Dendritic cell treated with granulocyte-macrophage colony-stimulating factor and Interleukin-4, amounts not matched to agents 40 ng/mL and 50 ng/mL, for 4 days (primary cell): ENCODE measurements at regions of chr7 and their contacts with region 1.

Region 1: GRCh38 chr7:28685644-28686417 is 272.3 kb downstream of the TRIL start:
- H3K4me3 Mint-ChIP-seq: no peak overlapping the region
- H3K27ac Mint-ChIP-seq: no peak overlapping the region
- H3K4me1 Mint-ChIP-seq: peaks cover 39% of the 10 kb centered on the region
- H3K27me3 Mint-ChIP-seq: no peaks in the 10 kb centered on the region

Region 2: DNA sequence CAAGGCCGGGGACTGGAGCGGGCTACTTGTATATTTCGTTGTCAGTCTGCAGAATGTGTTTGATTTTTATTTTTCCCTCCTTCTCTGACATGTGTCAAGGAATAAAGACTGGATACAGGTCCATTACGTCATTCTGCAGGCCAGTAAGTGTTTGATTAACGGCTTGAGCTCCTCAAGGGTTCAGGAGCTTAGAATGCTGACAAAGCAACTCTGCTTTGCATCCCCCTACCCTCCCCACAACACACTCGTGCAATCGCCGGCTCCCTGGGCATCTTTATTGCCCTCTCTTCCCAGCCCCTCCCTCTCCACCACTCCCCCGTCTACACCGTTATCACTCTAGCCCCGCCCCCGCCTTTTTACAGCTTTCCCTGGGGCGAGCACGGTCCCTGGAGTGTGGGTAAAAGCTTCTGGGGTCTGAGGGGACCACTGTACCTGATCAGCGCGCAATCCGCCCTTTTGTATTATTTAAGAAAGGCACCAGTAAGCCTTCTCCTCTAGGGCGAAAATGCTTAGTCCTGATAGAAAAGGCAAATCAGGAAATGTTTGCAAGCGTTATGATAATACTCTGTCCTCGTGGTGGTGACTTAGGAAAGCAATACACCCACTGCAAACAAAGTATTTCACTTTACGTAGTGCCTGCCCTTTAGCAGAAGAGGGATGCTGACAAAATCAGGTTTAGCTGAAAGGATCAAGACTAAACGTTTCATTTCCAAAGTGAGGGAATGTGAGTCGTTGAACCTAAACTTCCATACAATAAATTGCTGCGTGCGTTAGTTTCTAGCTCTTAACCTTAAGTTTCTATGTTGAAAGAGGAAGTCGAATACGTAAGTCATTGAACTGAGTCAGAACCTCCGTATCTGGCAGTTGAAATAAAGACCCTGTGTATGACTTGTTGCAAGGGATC is 275.0 kb before region 1 on chr7:
- intact Hi-C with region 1: loop called (anchors 5 kb)
- H3K4me3 Mint-ChIP-seq: peak overlapping the region; percentile 75
- H3K27ac Mint-ChIP-seq: peak overlapping the region; percentile 92
- H3K4me1 Mint-ChIP-seq: peaks cover 35% of the 10 kb centered on the region
- H3K27me3 Mint-ChIP-seq: peaks cover 82% of the 10 kb centered on the region

Region 3: DNA sequence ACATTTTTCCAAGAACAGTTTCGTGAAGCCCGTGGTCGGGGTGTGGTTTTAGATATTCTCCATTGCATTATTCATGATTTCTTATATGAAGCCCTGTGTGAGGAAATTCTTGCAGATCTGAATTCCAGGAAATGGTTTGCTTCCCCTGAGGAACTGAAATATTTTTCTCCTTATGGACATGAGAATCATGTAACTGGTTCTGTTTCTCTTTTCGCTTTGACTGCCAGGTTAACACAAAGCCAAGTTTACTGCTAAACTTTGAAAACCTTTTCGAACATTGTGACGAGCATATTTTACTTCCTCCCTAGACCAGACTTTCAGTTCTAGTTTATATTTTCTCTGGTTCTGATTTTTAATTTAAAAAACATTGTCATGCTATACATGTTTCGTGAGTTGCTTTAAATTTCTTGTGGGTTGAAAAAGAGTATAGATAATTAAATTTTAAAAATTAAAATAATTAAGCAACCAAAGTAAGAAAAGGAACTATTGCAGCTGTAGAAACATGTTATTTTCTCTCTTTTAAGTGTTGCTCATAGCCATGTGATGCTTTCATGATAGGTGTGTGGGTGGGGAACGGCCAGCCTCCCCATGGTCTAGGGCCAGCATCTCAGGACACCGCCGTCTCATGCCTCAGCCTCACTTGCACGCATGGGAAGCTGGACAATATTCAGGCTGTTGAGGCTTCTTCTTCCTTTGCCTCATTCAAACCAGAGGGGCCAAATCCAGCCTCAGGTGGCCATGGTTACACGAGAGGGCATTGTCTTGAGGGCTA is 176.4 kb before region 1 on chr7:
- intact Hi-C with region 1: loop called (anchors 2 kb)
- H3K4me3 Mint-ChIP-seq: peak overlapping the region; percentile 55
- H3K27ac Mint-ChIP-seq: peak overlapping the region; percentile 97
- H3K4me1 Mint-ChIP-seq: peaks cover 50% of the 10 kb centered on the region
- H3K27me3 Mint-ChIP-seq: peaks cover 3% of the 10 kb centered on the region

Region 4: DNA sequence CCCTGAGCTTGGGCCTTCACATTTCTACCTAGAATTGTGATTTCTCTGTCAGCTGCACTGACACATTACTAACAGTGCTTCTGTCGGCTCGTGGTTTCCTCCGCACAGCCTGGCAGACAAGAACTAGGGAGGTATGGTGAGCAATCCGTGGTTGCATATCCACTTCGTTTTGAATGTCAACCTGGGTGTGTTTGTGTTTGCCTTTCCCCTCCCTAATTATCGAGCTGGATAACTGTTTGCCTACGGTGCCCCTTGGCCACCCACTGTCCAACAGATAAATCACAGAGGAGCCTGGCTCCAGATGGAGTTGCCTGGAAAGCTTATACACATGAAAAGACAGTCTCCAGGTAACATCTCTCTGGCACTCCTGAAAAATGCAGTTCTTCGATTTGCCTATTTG is 43.5 kb after region 1 on chr7:
- intact Hi-C with region 1: loop called (anchors 5 kb)
- H3K4me3 Mint-ChIP-seq: no peak overlapping the region
- H3K27ac Mint-ChIP-seq: peak overlapping the region; percentile 81
- H3K4me1 Mint-ChIP-seq: peaks cover 46% of the 10 kb centered on the region
- H3K27me3 Mint-ChIP-seq: no peaks in the 10 kb centered on the region

Region 5: GRCh38 chr7:28784171-28784902 is 98.5 kb after region 1 on chr7:
- intact Hi-C with region 1: loop called (anchors 10 kb)
- H3K4me3 Mint-ChIP-seq: no peak overlapping the region
- H3K27ac Mint-ChIP-seq: peak overlapping the region; percentile 70
- H3K4me1 Mint-ChIP-seq: peaks cover 84% of the 10 kb centered on the region
- H3K27me3 Mint-ChIP-seq: no peaks in the 10 kb centered on the region

Region 6: DNA sequence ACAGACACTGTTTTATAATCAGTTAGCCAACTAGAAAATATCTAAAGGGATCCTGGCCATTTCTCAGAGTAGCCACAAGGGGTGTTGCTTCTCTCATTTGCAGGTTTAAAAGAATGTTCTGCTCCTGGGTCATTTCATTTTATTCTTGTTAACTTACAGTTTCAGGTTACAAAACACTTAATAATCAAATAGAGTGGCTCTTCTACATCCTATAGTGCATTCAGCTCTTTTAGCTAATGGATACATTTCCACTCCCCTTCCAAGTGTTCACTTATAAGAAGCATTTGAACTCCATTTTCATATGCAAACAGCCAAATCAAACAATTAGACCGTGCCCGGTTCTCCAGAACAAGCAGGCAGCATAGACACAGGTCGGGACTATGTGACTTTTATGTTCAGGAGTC is 154.8 kb after region 1 on chr7:
- intact Hi-C with region 1: no loop called
- H3K4me3 Mint-ChIP-seq: no peak overlapping the region
- H3K27ac Mint-ChIP-seq: no peak overlapping the region
- H3K4me1 Mint-ChIP-seq: peaks cover 5% of the 10 kb centered on the region
- H3K27me3 Mint-ChIP-seq: peaks cover 32% of the 10 kb centered on the region